Transverse colon (tissue), 4 donors: ENCODE measurements at regions of chr4 and their contacts with region 1.

Region 1: DNA sequence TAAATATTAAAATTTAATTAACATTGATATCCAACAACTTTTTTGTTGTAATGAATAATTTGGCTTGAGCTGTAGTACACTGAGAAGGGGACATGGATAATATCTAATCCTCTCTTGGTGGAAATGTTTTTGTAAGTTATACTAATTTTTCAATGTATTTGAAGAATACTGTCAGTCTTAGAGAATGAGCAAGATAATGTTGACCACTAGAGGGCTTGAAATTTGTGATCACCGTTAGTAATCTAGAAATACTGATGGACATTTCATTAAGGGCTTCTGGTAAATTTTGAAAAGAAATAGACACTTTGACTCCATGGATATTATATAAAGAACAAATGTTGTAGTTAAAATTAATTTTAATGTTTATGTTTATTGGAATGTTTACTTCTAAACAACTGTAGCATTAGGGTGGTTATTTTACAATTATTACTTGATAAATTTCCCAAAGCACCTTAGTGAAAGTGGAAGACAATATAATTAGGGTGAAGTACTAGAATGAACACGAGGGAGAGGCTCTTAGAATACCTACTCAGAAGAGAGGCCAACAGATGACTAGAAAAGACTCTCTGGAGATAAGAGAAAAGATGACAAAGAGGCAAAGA is 20.0 kb upstream of the CAMK2D start:
- DNase-seq: no peak
- H3K4me3 ChIP-seq: no peak overlapping the region
- H3K27ac ChIP-seq: no peak overlapping the region
- H3K4me1 ChIP-seq: peaks cover 0 to 4% (median 0%) of the 10 kb centered on the region in 4 donors
- H3K27me3 ChIP-seq: no peaks in the 10 kb centered on the region
- CTCF ChIP-seq: peak; percentile 64 to 72 (median 68)
- EP300 ChIP-seq: no peak
- POLR2A ChIP-seq: no peak

Region 2: DNA sequence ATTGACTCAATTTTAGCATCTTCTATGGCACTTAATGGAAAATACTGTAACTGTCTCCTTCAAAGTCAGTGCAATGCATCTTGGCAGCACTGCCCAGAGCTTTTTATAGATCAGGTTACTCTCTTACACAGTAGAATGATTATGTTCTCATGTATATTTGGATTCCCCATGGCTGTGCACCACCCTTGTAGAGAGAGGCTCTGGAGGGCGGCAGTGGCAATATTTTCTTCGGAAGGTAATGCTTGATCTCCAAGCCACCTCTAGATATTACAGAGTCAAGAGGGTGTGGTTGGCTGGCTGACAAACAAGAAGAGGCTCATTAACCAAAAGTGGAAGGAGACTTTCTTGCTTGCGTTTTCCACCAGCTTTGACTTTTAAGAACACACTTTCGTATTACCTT is 270.7 kb after region 1 on chr4:
- in situ Hi-C with region 1: loop called in 2 of 4 experiments (anchors 25 kb)
- intact Hi-C with region 1: no loop called
- DNase-seq: no peak
- H3K4me3 ChIP-seq: no peak overlapping the region
- H3K27ac ChIP-seq: no peak overlapping the region
- H3K4me1 ChIP-seq: no peaks in the 10 kb centered on the region
- H3K27me3 ChIP-seq: no peaks in the 10 kb centered on the region
- CTCF ChIP-seq: no peak
- EP300 ChIP-seq: no peak
- POLR2A ChIP-seq: no peak

Region 3: GRCh38 chr4:114386637-114387233 is 605.2 kb after region 1 on chr4:
- in situ Hi-C with region 1: loop called in 1 of 4 experiments (anchors 25 kb)
- intact Hi-C with region 1: no loop called
- DNase-seq: no peak
- H3K4me3 ChIP-seq: no peak overlapping the region
- H3K27ac ChIP-seq: no peak overlapping the region
- H3K4me1 ChIP-seq: peaks cover 0 to 5% (median 0%) of the 10 kb centered on the region in 4 donors
- H3K27me3 ChIP-seq: no peaks in the 10 kb centered on the region
- CTCF ChIP-seq: peak; percentile 59 to 71 (median 67)
- EP300 ChIP-seq: no peak
- POLR2A ChIP-seq: no peak

Region 4: GRCh38 chr4:115090483-115091075 is 1309.0 kb after region 1 on chr4:
- in situ Hi-C with region 1: no loop called
- intact Hi-C with region 1: loop called (anchors 5 kb)
- DNase-seq: no peak
- H3K4me3 ChIP-seq: no peak overlapping the region
- H3K27ac ChIP-seq: no peak overlapping the region
- H3K4me1 ChIP-seq: no peaks in the 10 kb centered on the region
- H3K27me3 ChIP-seq: no peaks in the 10 kb centered on the region
- CTCF ChIP-seq: peak; percentile 43 to 61 (median 46)
- EP300 ChIP-seq: no peak
- POLR2A ChIP-seq: no peak